Adrenal gland (tissue), 19 donors: ENCODE measurements at regions of chr3 and their contacts with region 1.

Region 1: GRCh38 chr3:120417272-120417911 is 33.4 kb downstream of the FSTL1 start:
- DNase-seq: peak; percentile 95 to 99 (median 97)
- H3K4me3 ChIP-seq: peak overlapping the region in 1 of 4 donors; percentile 34
- H3K27ac ChIP-seq: peak overlapping the region; percentile 74 to 93 (median 80)
- H3K4me1 ChIP-seq: peaks cover 54 to 55% of the 10 kb centered on the region in 2 donors
- H3K27me3 ChIP-seq: no peaks in the 10 kb centered on the region
- CTCF ChIP-seq: peak; percentile 80 to 96 (median 92)
- POLR2A ChIP-seq: peak in 1 of 2 donors; percentile 79

Region 2: GRCh38 chr3:120239644-120240043 is 177.7 kb before region 1 on chr3:
- intact Hi-C with region 1: loop called in 1 of 2 experiments (anchors 5 kb)
- DNase-seq: no peak
- H3K4me3 ChIP-seq: no peak overlapping the region
- H3K27ac ChIP-seq: no peak overlapping the region
- H3K4me1 ChIP-seq: no peaks in the 10 kb centered on the region
- H3K27me3 ChIP-seq: no peaks in the 10 kb centered on the region
- CTCF ChIP-seq: no peak
- POLR2A ChIP-seq: no peak